H1 (cell line): ENCODE measurements at regions of chr19 and their contacts with region 1.

Region 1: DNA sequence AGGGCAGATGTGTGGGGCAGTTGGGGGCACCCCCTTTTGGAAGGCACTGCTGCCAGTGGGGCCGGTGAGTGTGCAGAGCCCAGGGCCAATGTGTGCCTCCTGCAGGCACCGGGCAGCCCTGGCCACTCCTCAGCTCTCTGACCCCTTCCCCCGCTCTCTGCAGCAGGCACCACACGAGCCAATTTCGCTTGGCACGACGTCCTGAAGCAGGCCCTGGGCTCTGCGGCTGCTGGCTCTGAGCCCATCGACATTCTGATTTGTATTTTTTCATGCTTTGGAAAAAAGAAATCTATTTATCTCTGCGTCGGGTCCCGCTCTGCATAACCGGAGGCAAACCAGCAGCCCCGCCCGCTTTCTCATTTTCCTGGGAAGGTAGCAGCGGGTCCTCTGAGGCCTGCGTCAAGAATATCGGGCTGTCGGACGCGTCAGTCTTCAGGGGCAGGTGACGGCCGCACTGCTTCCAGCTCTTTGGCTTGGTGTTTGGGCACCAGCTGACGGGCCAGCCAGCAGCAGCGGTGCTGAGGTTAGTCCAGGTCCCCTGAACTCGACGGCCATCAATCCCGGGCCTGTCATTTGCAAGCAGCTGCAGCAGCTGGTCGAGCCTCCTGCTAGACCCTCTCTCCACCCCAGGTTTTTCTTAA is 134.3 kb downstream of the KDM4B start:
- DNase-seq: no peak
- H3K4me3 ChIP-seq: no peak overlapping the region
- H3K27ac ChIP-seq: no peak overlapping the region
- H3K4me1 ChIP-seq: no peaks in the 10 kb centered on the region; a peak in 1 of 7 replicates
- H3K27me3 ChIP-seq: no peaks in the 10 kb centered on the region
- CTCF ChIP-seq: no peak
- EP300 ChIP-seq: no peak
- POLR2A ChIP-seq: no peak
- RAD21 ChIP-seq: no peak

Region 2: DNA sequence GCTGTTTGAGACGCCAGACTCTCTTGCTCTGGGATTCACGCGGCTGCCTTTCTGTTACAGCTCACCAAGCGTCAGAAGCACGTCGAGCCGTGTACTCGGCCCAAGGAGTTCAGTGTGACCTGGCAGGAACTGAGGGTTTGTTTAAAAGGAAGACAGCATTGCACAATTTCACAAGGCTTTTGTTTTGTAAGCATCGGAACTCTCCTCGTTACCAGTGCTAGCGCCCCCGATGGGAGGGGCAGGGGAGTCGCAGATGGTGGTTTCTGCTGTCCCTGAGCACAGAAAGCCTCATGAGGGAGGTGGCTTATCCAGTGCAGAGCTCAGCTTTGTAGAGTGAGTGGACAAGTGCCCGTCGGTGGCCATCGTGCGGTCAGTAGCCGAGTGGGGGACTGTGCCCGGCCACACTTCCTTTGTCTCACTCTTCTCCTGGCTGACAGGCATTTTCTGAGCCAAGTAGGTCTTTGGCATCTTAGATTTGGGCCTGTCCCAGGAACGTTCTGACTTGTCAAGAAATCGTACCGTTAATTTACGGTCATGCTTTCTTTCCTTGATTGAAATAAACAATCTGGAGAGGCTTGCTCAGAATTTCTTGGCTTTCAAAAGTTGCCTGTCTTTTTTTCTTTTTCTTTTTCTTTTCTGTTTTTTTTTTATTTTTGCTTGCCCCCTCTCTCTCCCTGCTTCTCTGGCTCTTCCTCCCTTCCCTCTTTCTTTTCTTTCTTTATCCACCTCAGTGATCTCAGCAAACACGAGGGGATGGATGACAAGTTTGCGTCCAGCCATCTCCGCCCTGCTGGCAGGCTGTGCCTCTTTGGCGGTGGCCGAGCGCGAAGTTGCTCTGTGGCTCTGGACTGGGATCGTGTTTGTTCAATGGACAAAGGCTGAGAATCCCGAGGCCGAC is 126.5 kb before region 1 on chr19:
- CTCF ChIA-PET with region 1: no interaction called
- POLR2A ChIA-PET with region 1: no interaction called
- DNase-seq: peak in 1 of 2 experiments; percentile 70
- H3K4me3 ChIP-seq: no peak overlapping the region
- H3K27ac ChIP-seq: no peak overlapping the region
- H3K4me1 ChIP-seq: peaks cover 0 to 8% (median 2%) of the 10 kb centered on the region in 4 experiments; a peak in 6 of 7 replicates
- H3K27me3 ChIP-seq: no peaks in the 10 kb centered on the region
- CTCF ChIP-seq: peak; percentile 62 to 81 (median 69)
- EP300 ChIP-seq: no peak
- POLR2A ChIP-seq: no peak
- RAD21 ChIP-seq: peak in 1 of 2 experiments; percentile 31; a peak in 1 of 4 replicates

Region 3: DNA sequence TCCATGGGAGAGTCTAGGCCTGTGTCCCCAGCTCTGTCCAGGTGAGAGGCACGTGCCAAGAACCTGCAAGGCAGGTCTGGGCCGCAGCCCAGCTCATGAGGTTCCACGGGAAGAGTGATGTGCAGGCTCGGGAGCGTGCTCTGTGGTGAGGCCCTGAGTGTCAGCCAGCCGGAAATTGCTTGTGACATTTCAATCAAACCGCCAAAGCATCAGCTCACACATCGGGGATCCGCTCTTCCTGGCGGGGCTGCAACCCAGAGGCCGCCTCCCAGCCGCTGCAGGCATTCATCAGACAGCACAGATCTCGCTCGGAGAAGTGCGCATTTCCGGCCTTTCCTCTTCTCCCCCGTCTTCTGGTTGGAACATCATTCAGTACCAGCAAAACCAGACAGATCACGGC is 25.0 kb before region 1 on chr19:
- CTCF ChIA-PET with region 1: interaction called, 12 read pairs
- POLR2A ChIA-PET with region 1: interaction called, 3 read pairs
- DNase-seq: no peak
- H3K4me3 ChIP-seq: no peak overlapping the region
- H3K27ac ChIP-seq: 0 out of 2 replicates have a peak overlapping the region, but pooled peaks have one; percentile 42
- H3K4me1 ChIP-seq: peaks cover 7 to 10% (median 10%) of the 10 kb centered on the region in 4 experiments; a peak in 5 of 7 replicates
- H3K27me3 ChIP-seq: no peaks in the 10 kb centered on the region
- CTCF ChIP-seq: no peak
- EP300 ChIP-seq: no peak
- POLR2A ChIP-seq: no peak
- RAD21 ChIP-seq: no peak

Region 4: DNA sequence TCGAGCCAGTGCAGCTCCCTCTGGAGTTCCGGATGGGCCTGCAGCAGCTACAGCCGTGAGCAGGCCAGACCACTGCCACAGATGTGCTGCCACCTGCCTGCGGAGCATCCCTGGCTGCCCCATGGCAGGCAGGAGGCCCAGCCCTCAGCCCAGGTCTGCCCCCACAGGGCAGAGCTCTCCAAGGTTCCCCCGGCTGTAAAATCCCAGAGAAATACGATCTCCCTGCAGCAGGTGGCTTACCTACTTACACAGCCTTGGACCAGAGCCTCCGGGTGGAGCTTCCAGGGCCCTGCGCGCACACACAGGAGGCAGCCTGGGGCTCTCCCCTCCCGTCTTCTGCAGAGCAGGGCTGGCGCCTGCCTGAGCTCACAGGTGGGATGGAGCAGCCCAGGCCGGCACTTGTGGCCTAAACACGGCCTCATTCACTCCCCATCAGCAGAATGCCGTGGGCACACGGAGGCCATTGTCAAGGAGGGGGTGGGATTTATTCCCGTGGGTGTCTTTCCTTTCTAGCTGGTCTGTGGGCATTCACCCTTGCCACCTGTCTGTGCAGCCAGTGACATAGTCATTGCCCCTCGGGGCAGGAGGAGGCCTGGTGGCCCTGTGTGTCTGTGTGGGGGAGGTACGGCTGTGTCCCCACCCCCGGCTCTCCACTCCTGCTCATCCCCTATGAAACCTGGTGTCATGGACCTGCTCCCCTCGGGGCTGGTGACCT is 16.3 kb before region 1 on chr19:
- CTCF ChIA-PET with region 1: interaction called, 45 read pairs
- POLR2A ChIA-PET with region 1: interaction called, 6 read pairs
- DNase-seq: peak; percentile 76 to 79
- H3K4me3 ChIP-seq: no peak overlapping the region
- H3K27ac ChIP-seq: no peak overlapping the region
- H3K4me1 ChIP-seq: peaks cover 0 to 6% (median 4%) of the 10 kb centered on the region in 4 experiments; a peak in 4 of 7 replicates
- H3K27me3 ChIP-seq: no peaks in the 10 kb centered on the region
- CTCF ChIP-seq: peak; percentile 75 to 97 (median 89)
- EP300 ChIP-seq: no peak
- POLR2A ChIP-seq: no peak
- RAD21 ChIP-seq: peak; percentile 45 to 68

Region 5: GRCh38 chr19:5128251-5128935 is 25.2 kb after region 1 on chr19:
- CTCF ChIA-PET with region 1: interaction called, 10 read pairs
- POLR2A ChIA-PET with region 1: interaction called, 3 read pairs
- DNase-seq: no peak
- H3K4me3 ChIP-seq: no peak overlapping the region
- H3K27ac ChIP-seq: no peak overlapping the region
- H3K4me1 ChIP-seq: peaks cover 5 to 57% (median 48%) of the 10 kb centered on the region in 4 experiments
- H3K27me3 ChIP-seq: no peaks in the 10 kb centered on the region
- CTCF ChIP-seq: no peak
- EP300 ChIP-seq: no peak
- POLR2A ChIP-seq: no peak
- RAD21 ChIP-seq: no peak